Activated CD8-positive, alpha-beta memory T cell treated with anti-CD3 and anti-CD28 coated beads, Interleukin-2, amount 10 ng/mL, durations not matched to agents 7 days and 5 days (primary cell): ENCODE measurements at regions of chr22 and their contacts with region 1.

Region 1: DNA sequence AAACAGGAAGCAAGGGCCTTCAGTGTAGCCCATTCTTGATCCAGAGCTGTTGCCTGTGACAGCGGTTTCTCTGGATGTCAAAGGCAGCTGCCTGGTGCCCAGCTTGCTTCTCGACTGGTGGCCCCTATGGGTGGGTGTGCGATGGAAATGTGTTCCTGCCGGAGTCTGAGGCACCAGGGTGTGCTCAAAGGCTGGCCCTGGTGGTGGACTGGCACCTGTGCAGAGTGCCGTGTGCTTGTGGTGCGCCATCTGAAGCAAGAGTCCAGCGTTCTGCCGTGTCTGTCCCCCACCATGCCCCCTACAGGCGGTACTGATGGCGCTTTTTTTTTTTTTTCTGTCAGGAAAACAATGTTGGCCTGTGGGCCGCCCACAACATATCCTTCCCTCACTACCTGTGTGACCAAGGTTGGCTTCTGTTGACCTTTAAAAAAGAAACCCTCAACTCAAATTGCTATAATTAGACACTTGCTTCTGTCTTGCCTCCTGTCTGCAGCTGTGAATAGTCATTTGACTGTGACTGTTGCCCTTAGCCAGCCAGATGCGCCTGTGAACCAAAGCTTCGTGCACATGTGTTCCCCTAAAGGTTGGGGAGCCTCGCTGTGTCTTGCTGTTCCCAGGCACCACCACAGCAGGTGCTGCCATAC is 4.7 kb upstream of the RANBP1 start:
- DNase-seq: peak; percentile 65
- ATAC-seq: peak; percentile 70
- H3K4me3 Mint-ChIP-seq: no peak overlapping the region
- H3K27ac Mint-ChIP-seq: peak overlapping the region; percentile 82
- H3K4me1 Mint-ChIP-seq: peaks cover 43% of the 10 kb centered on the region
- H3K27me3 Mint-ChIP-seq: no peaks in the 10 kb centered on the region

Region 2: DNA sequence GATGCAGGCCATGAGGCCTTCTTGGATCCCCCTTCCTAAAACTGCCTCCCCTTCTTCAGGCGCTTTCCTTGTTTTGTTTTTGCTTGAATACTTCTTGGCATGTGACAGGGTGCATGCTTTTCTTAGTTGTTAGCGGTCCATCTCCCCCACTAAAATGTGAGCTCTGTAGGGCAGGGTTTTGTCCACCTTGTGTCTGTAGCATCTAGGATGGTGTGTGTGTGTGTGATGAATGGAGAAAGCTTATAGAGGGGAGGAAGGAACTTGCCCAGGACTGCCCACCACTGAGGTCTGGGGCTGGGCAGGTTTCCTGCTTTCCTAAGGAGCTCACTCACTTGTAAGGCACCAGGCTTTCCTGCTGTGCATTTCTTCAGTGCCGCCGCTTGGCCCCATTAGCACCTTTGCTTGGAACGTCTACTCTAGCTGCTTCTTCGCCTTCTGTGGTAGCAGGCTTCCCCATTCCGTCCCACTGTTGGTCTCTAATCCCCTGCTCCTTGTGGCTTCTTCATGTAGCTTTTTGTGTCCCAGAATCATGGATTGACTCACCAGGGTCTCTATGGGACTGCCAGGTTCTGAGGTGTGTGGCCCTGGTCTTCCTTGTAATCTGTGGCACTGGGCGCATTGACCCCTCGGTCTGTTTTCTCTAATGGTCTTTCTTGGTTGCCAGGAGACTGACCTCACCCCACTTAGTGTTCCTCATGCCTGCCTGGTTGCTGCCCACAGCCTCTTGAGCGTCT is 27.8 kb before region 1 on chr22:
- CTCF ChIA-PET with region 1: interaction called, 10 read pairs
- DNase-seq: no peak
- ATAC-seq: no peak
- H3K4me3 Mint-ChIP-seq: peak overlapping the region; percentile 1
- H3K27ac Mint-ChIP-seq: peak overlapping the region; percentile 33
- H3K4me1 Mint-ChIP-seq: peaks cover 60% of the 10 kb centered on the region
- H3K27me3 Mint-ChIP-seq: no peaks in the 10 kb centered on the region

Region 3: DNA sequence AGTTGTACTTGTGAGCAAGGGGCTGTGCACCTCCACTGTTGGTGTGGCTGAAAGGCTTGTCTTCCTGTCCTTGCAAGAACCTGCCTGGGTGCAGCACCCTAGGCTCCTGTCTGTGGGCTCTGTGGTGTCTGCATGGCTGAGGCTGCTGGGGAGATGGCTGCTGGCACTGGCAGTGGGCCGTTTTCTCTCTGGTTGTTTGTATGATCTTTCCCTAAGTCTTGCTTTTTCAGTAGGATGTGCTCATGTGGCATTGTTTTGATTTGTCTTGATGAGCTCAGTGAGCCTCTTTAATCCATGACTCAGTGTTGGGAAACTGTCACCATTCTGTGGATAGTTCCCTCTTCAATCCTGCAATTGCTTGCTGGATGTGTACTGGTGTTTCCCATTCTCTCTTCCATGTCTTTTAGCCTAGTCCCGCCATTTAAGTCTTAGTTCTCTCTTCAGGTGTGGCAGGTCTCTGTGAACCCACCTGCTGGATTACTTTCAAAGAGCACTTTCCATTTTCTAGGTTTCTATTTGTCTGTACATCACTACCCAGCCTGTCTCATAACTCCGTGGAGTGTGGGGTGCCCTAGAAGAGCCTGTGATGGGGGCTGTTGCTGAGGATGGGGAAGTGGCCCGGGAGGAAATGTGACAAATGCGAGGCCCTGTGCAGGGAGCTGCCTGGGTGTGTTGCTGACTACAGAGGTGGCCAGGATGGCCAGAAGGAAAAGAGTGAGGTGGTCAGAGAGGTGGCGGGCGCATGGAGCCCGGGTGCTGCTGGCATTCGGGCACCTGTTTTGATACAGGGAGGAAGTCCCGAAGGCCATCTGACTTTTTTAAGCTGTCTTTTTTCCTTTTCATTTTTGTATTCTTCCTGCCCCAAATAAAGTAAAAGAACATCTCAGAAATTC is 20.6 kb before region 1 on chr22:
- CTCF ChIA-PET with region 1: interaction called, 14 read pairs
- DNase-seq: no peak
- ATAC-seq: peak; percentile 52
- H3K4me3 Mint-ChIP-seq: peak overlapping the region; percentile 13
- H3K27ac Mint-ChIP-seq: peak overlapping the region; percentile 88
- H3K4me1 Mint-ChIP-seq: peaks cover 77% of the 10 kb centered on the region
- H3K27me3 Mint-ChIP-seq: no peaks in the 10 kb centered on the region